Posterior cingulate gyrus (tissue), 11 donors: ENCODE measurements at regions of chr1 and their contacts with region 1.

Region 1: DNA sequence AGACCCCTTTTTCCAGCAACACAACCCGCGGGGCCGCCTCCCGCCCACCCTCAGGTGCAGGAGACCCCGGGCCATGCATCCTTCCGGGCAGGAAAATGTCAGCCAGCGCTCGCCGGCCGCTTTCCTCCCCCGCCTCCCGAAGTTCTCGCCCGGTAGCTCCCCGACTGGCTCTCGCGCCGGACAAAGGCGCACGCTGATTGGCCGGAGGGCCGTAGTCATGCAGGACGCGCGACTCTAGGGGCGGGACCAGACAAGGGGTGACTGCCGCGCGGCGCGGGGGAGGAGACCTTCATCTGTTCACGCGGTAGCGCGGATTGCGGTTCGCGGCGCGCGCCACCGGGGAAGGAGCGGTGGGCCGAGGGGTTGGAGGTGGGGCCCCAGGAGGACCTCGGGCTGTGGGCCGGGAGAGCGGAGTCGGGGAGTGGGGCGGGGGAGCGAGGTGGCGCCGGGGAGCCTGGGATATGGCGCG is at the start of gene FLVCR1:
- DNase-seq: peak; percentile 95 to 100 (median 98)

Region 2: GRCh38 chr1:212791676-212792395 is 66.2 kb before region 1 on chr1 and contains the starts of genes NSL1 and TATDN3:
- intact Hi-C with region 1: loop called (anchors 5 kb)
- DNase-seq: peak; percentile 83 to 98 (median 90)

Region 3: DNA sequence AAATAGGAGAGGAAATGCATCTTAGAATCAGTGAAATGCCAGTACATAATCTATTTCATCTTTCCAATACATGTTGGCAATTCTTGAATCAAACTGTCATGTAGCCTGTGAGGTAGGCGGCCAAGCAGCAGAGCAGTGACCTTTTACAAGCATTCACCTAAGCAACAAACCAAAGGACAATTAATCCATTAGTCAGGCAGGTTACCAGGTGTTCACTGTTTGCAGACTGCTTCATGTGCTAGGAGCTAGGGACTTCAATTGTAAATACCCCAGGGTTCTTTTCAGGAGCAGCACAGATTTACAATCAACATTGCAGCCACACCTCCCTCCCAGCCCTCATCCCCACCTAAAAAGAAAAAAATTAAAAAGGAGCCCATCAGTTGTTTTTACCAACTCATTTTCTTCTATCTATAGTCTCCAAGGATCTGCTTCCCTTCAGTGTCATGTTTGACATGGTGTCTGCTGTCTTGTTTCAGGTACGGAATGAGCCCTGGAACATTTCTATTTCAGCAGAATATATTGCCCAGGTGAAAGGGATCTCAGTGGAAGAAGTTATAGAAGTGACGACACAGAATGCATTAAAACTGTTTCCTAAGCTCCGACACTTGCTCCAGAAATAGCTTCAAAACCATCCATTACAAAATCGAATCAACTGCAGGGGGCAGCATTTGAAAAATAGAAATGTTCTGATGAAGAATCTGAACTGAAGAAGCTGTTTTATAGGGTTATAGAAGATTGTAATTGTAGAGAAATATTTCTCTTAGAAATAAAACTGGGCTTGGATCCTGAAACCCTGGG is 43.3 kb before region 1 on chr1:
- intact Hi-C with region 1: loop called (anchors 10 kb)
- DNase-seq: no peak

Region 4: DNA sequence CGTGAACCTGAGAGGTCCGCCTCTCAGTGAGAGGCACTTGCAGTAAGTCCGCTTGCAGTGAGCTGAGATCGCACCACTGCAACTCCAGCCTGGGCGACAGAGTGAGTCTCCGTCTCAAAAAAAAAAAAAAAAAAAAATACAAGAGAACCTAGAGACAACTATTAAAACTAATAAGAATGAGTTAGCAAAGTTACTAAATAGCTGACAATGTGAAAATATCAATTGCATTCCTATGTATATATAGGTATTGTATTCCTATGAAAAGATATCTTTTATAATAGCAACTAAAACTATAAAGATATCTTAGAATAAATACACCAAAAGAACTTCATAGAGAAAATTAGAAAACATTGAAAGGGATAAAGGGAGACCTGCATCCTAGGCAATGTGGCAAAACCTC is 20.4 kb after region 1 on chr1:
- intact Hi-C with region 1: loop called (anchors 1 kb)
- DNase-seq: no peak

Region 5: GRCh38 chr1:212928323-212929291 is 70.6 kb after region 1 on chr1:
- intact Hi-C with region 1: no loop called
- DNase-seq: peak in 1 of 10 donors; percentile 70

Region 6: DNA sequence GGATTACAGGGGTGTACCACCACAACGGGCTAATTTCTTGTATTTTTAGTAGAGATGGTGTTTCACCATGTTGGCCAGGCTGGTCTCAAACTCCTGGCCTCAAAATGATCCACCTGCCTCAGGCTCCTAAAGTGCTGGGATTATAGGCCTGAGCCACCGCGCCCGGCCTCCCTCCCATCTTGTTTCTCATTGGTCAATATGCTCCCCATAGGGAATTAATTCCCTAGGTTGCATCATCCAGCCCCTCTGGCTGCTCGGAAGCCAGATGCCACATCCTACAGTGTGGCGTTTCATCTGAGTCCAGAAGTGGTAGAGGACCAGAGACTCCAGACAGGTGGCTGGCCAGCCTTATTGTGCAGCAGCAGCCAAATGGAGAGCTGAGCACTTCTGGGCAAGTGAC is 80.8 kb after region 1 on chr1:
- intact Hi-C with region 1: no loop called
- DNase-seq: no peak

Region 7: DNA sequence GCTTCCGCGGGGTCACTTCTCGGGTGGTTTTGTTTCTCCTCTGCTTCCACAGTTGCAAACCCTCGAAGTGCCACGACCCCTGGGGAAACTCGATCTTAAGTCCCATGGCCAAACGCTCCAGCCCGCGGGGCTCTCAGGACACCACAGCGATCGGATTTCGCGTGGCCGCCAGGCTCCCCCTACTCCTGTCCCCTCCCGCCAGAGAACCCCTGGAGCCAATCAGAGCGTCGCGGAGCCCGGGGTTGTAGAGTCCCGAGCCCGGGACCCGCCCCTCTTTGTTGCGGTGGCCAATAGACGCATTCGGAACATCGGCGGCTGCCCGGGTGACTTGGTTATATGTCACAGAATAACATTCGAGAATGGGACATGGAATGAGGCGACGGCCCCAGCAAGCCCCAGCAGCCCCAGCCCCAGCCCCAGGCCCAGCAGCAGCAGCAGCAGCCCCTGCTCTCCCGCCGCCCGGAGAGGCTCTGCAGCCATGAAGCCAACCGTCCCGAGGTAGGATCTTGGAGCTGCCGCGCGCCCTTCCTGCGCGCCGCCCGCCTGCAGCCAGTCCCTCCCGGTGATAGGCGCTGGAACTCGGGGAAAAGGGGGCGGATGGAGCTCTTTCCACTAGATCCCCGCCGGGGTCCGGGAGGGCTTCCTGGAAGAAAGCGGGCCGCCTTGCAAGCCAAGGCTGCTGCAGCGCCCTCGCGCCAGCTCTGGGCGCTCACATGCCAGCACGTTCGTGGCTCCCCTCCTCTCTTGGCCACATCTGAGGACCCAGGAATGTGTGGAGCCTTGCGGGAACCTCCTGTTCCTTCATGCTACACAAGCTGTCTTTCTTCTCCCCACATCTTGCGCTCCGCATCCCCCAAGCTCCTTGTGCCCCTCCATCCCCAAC is 92.5 kb after region 1 on chr1 and contains the start of gene VASH2:
- intact Hi-C with region 1: loop called (anchors 5 kb)
- DNase-seq: peak; percentile 74 to 98 (median 86)